Right ventricle myocardium inferior (tissue), 1 donor: ENCODE measurements at regions of chr3 and their contacts with region 1.

Region 1: GRCh38 chr3:150787741-150788370 is 24.9 kb upstream of the SIAH2 start:
- DNase-seq: peak; percentile 92
- ATAC-seq: peak; percentile 79

Region 2: GRCh38 chr3:150870396-150870795 is 82.5 kb after region 1 on chr3:
- intact Hi-C with region 1: loop called (anchors 5 kb)
- DNase-seq: no peak
- ATAC-seq: no peak

Region 3: DNA sequence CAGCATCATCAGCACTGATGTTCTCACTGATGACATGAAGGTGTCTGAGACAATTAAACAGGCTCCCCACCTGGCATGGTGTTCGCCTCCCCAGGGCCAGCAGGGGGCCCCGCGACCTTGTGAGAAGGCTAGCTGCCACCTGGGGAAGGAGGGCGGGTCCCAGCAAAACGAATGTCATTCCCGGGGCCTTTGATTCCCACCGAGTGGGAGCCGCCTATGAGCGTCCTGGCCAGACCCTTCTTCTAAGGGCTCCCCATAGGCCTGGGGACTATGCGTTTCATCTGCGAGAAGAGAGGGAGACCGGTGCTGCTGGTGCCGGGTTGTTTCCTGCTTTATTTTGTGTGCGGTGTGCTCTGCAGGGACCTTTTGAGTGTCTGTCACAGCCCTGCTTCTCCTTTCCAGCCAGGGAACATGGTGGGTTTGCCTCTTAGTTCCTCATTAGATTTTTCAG is 137.9 kb after region 1 on chr3:
- intact Hi-C with region 1: loop called (anchors 10 kb)
- DNase-seq: no peak
- ATAC-seq: peak; percentile 56